Activated CD4-positive, alpha-beta T cell treated with anti-CD3 and anti-CD28 coated beads for 36 hours (primary cell): ENCODE measurements at regions of chr7 and their contacts with region 1.

Region 1: GRCh38 chr7:106112117-106112971 is at the start of gene SYPL1:
- DNase-seq: peak; percentile 95
- ATAC-seq: peak; percentile 86
- H3K4me3 Mint-ChIP-seq: peak within 1 kb of the TSS; percentile 79
- H3K27ac Mint-ChIP-seq: peak within 1 kb of the TSS; percentile 89
- H3K4me1 Mint-ChIP-seq: peaks cover 64% of the 10 kb centered on the region
- H3K27me3 Mint-ChIP-seq: no peaks in the 10 kb centered on the region
- total RNA-seq, gene SYPL1: 23.7 to 28.8 TPM

Region 2: GRCh38 chr7:105522062-105522936 is 590.0 kb before region 1 on chr7 and contains the start of gene PUS7:
- CTCF ChIA-PET with region 1: interaction called, 3 read pairs
- POLR2A ChIA-PET with region 1: interaction called, 4 read pairs
- intact Hi-C with region 1: loop called in 1 of 2 experiments (anchors 1 kb)
- DNase-seq: peak; percentile 91
- ATAC-seq: peak; percentile 89
- H3K4me3 Mint-ChIP-seq: peak within 1 kb of the TSS; percentile 92
- H3K27ac Mint-ChIP-seq: peak within 1 kb of the TSS; percentile 90
- H3K4me1 Mint-ChIP-seq: peaks cover 17% of the 10 kb centered on the region
- H3K27me3 Mint-ChIP-seq: no peaks in the 10 kb centered on the region
- total RNA-seq, gene PUS7: 31.9 to 33.8 TPM

Region 3: GRCh38 chr7:105678811-105679495 is 433.4 kb before region 1 on chr7:
- CTCF ChIA-PET with region 1: no interaction called
- POLR2A ChIA-PET with region 1: no interaction called
- intact Hi-C with region 1: loop called in 1 of 2 experiments (anchors 5 kb)
- DNase-seq: peak; percentile 62
- ATAC-seq: peak; percentile 21
- H3K4me3 Mint-ChIP-seq: peak overlapping the region; percentile 83
- H3K27ac Mint-ChIP-seq: peak overlapping the region; percentile 93
- H3K4me1 Mint-ChIP-seq: peaks cover 63% of the 10 kb centered on the region
- H3K27me3 Mint-ChIP-seq: no peaks in the 10 kb centered on the region

Region 4: DNA sequence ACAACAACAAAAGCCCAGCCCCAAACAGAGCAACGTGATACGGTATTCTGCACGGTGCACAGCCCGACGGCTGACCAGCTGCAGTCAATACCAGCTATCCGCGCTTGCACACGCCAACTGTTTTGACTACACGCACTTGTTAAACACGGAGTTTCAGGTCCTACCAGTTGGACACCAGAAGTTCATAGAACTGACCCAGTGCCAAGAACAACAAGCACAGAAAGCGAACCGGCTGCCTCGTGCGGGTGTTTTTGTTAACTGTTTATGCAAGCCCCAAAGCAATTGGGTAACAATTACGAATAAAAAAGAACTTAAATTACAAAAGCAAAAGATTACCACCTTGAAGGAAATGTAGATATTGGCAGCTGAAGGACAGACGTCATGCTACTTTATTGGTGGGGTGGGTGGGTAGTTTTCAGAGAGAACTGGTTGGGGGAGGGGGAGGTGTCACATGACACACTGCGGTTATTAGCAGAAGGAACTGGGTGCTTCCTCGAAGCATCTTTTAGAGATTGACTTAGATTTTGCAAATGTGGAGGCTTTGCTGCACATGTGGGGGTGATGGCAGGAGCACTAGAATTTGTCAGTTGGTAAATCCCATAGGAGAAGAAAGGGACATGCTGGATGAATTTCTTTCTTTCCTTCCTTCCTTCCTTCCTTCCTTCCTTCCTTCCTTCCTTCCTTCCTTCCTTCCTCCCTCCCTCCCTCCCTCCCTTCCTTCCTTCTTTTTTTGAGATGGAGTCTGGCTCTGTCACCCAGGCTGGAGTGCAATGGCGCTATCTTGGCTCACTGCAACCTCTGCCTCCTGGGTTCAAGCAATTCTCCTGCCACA is 420.4 kb before region 1 on chr7:
- CTCF ChIA-PET with region 1: no interaction called
- POLR2A ChIA-PET with region 1: no interaction called
- intact Hi-C with region 1: loop called in 1 of 2 experiments (anchors 2 kb)
- DNase-seq: peak; percentile 71
- ATAC-seq: peak; percentile 53
- H3K4me3 Mint-ChIP-seq: peak overlapping the region; percentile 76
- H3K27ac Mint-ChIP-seq: peak overlapping the region; percentile 93
- H3K4me1 Mint-ChIP-seq: peaks cover 43% of the 10 kb centered on the region
- H3K27me3 Mint-ChIP-seq: no peaks in the 10 kb centered on the region

Region 5: DNA sequence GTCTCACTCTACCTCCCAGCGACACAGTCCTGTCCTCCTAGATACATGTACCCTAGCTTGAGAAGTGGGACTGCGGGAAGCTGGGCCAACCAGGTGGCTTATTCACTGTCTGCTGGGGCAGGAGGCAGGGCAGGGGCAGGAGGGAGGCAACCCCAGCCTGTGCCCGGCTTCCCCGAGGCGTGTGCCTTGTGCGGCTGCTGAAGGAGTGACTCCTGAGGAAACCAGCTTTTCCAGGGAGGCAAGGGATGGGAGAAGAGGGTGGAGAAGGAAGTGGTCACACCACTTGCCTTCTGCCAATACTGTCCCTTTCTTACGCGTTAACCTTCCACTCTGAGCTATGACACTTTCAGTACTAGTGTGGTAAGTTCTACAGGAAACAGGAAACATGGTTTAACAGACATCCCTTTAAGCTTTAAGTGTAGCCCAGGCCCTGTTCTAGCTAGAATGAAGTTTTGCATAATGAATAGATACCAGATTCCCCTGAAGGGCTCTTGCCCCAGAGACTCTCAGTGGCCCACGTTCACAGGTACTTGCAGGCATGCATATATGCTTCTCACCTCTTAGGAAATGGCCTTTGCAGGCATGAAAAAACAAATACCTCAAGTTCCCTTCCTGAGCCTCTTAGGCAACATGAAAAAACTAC is 40.9 kb before region 1 on chr7:
- CTCF ChIA-PET with region 1: interaction called, 6 read pairs
- POLR2A ChIA-PET with region 1: interaction called, 6 read pairs
- intact Hi-C with region 1: loop called (anchors 1 kb)
- DNase-seq: peak; percentile 71
- ATAC-seq: peak; percentile 98
- H3K4me3 Mint-ChIP-seq: peak overlapping the region; percentile 60
- H3K27ac Mint-ChIP-seq: peak overlapping the region; percentile 95
- H3K4me1 Mint-ChIP-seq: peaks cover 35% of the 10 kb centered on the region
- H3K27me3 Mint-ChIP-seq: no peaks in the 10 kb centered on the region

Region 6: DNA sequence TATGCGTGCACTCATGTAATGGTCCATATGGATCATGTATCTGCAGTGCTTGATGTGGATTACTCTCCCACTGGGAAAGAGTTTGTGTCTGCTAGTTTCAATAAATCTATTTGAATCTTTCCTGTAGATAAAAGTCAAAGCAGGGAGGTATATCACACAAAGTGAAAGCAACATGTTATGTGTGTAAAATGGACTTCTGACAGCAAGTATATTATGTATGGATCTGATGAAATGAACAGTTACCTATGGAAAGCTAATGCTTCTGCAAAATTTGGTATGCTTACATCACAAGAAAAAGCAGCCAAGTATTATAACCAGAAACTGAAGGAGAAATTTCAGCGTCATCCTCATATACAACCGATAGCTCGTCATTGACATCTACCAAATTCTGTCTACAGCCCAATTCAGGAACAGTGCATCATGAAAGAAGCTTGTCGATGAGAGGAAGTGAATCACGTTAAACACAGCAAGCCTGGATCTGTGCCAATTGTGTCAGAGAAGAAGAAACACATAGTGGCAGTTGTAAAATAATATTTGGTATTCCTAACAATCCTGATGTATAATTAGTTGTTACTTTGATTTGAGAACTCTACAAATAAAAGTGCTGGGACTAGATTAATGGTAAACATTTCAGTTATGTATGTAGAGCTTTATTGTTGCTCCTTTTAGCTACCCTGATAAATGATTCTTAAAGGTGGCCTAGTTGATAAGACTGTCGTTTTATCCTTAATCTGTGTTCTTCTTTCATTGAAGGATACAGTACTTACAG is 14.0 kb after region 1 on chr7:
- CTCF ChIA-PET with region 1: interaction called, 9 read pairs
- POLR2A ChIA-PET with region 1: interaction called, 4 read pairs
- intact Hi-C with region 1: loop called in 1 of 2 experiments (anchors 2 kb)
- DNase-seq: peak; percentile 72
- ATAC-seq: peak; percentile 93
- H3K4me3 Mint-ChIP-seq: peak overlapping the region; percentile 61
- H3K27ac Mint-ChIP-seq: peak overlapping the region; percentile 38
- H3K4me1 Mint-ChIP-seq: peaks cover 16% of the 10 kb centered on the region
- H3K27me3 Mint-ChIP-seq: peaks cover 2% of the 10 kb centered on the region